ENCODE measurements at regions of chr11 and their contacts with region 1.

Region 1: GRCh38 chr11:93614173-93614722 is 47.2 kb upstream of the CEP295 start:
- DNase-seq: no peak
- ATAC-seq: no peak
- H3K4me3 ChIP-seq: no peak overlapping the region
- H3K27ac ChIP-seq: no peak overlapping the region
- H3K4me1 ChIP-seq: no peaks in the 10 kb centered on the region
- H3K27me3 ChIP-seq: peaks cover 0 to 3% (median 0%) of the 10 kb centered on the region in 9 donors
- CTCF ChIP-seq: peak in 3 of 12 donors; percentile 3 to 10 (median 8)
- POLR2A ChIP-seq: no peak

Region 2: DNA sequence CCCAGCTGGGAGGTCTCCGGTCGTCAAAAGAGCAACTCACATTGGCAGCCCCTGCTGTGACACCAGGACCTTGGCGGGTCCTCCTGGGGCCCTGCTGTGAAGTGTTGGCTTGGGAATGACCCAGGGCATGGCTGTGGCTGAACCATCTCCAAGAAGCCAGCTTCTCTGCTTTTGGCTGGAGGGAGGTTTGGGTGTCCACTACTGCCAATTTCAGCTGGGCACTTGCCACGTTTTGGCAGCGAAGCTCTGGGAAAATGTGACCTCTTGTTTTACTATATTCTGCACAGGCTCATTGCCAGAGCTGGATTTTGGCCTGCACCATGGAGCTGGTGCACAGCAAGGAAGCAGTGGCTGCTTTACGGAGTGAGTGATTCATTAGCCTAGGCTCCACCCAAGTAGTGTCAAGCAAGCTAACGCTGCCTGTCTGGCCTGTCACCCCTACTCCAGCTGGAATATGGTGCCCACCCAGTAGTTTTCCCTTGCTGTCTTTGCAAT is 46.8 kb before region 1 on chr11:
- intact Hi-C with region 1: loop called in 1 of 10 experiments (anchors 2 kb)
- DNase-seq: peak; percentile 76 to 88 (median 78)
- ATAC-seq: peak; percentile 90 to 96 (median 96)
- H3K4me3 ChIP-seq: no peak overlapping the region
- H3K27ac ChIP-seq: peak overlapping the region in 9 of 12 donors; percentile 19 to 68 (median 51)
- H3K4me1 ChIP-seq: peaks cover 0 to 26% (median 7%) of the 10 kb centered on the region in 12 donors
- H3K27me3 ChIP-seq: no peaks in the 10 kb centered on the region
- CTCF ChIP-seq: no peak
- POLR2A ChIP-seq: no peak

Measured in heart left ventricle (tissue), 16 donors.